Activated CD8-positive, alpha-beta memory T cell treated with anti-CD3 and anti-CD28 coated beads, Interleukin-2, amount 10 ng/mL, durations not matched to agents 7 days and 5 days (primary cell): ENCODE measurements at regions of chrX and their contacts with region 1.

Region 1: GRCh38 chrX:132292793-132293192 is 73.5 kb upstream of the RAP2C start:
- DNase-seq: peak; percentile 39
- ATAC-seq: no peak
- H3K4me3 Mint-ChIP-seq: no peak overlapping the region
- H3K27ac Mint-ChIP-seq: no peak overlapping the region
- H3K4me1 Mint-ChIP-seq: peaks cover 3% of the 10 kb centered on the region
- H3K27me3 Mint-ChIP-seq: no peaks in the 10 kb centered on the region

Region 2: GRCh38 chrX:132266583-132267355 is 26.0 kb before region 1 on chrX:
- CTCF ChIA-PET with region 1: no interaction called
- DNase-seq: no peak
- ATAC-seq: peak; percentile 20
- H3K4me3 Mint-ChIP-seq: no peak overlapping the region
- H3K27ac Mint-ChIP-seq: no peak overlapping the region
- H3K4me1 Mint-ChIP-seq: peaks cover 20% of the 10 kb centered on the region
- H3K27me3 Mint-ChIP-seq: no peaks in the 10 kb centered on the region

Region 3: GRCh38 chrX:132330117-132330729 is 37.4 kb after region 1 on chrX:
- CTCF ChIA-PET with region 1: no interaction called
- DNase-seq: no peak
- ATAC-seq: no peak
- H3K4me3 Mint-ChIP-seq: no peak overlapping the region
- H3K27ac Mint-ChIP-seq: no peak overlapping the region
- H3K4me1 Mint-ChIP-seq: peaks cover 11% of the 10 kb centered on the region
- H3K27me3 Mint-ChIP-seq: no peaks in the 10 kb centered on the region

Region 4: GRCh38 chrX:132393992-132394391 is 101.2 kb after region 1 on chrX:
- CTCF ChIA-PET with region 1: no interaction called
- DNase-seq: no peak
- ATAC-seq: no peak
- H3K4me3 Mint-ChIP-seq: no peak overlapping the region
- H3K27ac Mint-ChIP-seq: no peak overlapping the region
- H3K4me1 Mint-ChIP-seq: no peaks in the 10 kb centered on the region
- H3K27me3 Mint-ChIP-seq: no peaks in the 10 kb centered on the region

Region 5: GRCh38 chrX:132489578-132490419 is 197.0 kb after region 1 on chrX:
- CTCF ChIA-PET with region 1: interaction called, 11 read pairs
- DNase-seq: peak; percentile 63
- ATAC-seq: peak; percentile 59
- H3K4me3 Mint-ChIP-seq: peak overlapping the region; percentile 83
- H3K27ac Mint-ChIP-seq: peak overlapping the region; percentile 96
- H3K4me1 Mint-ChIP-seq: peaks cover 39% of the 10 kb centered on the region
- H3K27me3 Mint-ChIP-seq: no peaks in the 10 kb centered on the region

Region 6: GRCh38 chrX:132563976-132564375 is 271.2 kb after region 1 on chrX:
- CTCF ChIA-PET with region 1: no interaction called
- DNase-seq: no peak
- ATAC-seq: no peak
- H3K4me3 Mint-ChIP-seq: no peak overlapping the region
- H3K27ac Mint-ChIP-seq: no peak overlapping the region
- H3K4me1 Mint-ChIP-seq: no peaks in the 10 kb centered on the region
- H3K27me3 Mint-ChIP-seq: no peaks in the 10 kb centered on the region

Region 7: DNA sequence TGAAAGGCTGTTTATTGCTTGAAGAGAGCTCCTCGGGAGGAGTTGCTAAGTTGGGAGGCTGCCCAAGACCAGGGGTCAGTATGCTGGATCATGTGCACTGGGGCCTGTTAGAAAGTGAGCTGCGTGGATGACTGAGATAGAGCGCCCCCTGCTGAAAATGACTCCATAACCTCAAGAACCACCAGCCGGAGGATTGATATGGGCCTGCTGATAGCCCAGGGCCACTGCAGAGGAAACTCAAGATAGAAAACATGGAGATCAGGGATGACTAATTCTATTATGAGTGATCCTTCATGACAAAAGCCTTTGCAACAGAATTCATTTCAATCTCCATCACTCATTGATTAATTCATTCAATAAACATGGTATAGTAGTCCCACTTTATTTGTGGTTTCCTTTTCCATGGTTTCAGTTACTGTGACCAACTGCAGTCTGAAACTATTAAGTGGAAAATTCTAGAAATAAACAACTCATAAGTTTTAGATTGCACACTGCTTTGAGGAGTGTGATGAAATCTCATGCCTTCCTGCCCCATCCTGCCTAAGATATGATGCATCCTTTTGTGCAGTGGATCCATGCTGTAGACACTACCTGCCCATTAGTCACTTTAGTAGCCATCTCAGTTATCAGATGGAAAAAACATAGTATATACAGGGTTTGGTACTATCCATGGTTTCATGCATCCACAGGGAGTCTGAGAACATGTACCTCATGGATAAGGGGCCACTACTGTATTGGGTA is 322.8 kb after region 1 on chrX:
- CTCF ChIA-PET with region 1: interaction called, 27 read pairs
- DNase-seq: peak; percentile 44
- ATAC-seq: peak; percentile 57
- H3K4me3 Mint-ChIP-seq: no peak overlapping the region
- H3K27ac Mint-ChIP-seq: no peak overlapping the region
- H3K4me1 Mint-ChIP-seq: no peaks in the 10 kb centered on the region
- H3K27me3 Mint-ChIP-seq: no peaks in the 10 kb centered on the region

Region 8: DNA sequence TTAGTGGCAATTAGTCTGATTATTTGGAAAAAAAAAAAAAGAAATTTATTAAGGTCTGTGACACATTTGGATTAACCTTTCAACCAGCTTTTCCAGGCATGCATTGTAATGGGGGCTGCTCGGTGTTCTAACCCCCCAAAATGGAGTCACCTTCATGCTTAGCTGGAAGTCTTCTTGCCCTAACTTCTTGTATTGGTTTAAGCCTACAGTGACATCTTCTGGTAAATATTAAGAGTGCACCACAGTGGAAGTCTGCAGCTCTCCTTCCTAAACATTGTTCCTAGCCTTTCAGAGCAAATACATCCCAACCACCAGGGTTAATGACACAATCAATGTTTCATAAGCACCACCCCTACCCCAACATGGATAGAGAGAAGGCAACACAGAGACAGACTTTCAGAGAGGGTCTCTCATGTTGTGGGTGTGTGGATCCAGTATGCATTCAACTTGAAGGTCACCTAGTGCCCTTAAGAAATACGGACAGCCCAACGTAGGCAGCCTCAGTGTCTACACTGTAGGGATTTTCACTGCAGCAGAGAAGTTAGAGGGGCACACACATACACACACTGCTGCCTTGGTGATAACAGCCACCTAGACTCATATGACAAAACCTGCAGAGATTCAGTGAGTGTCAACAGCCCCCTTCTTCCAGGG is 338.9 kb after region 1 on chrX:
- CTCF ChIA-PET with region 1: interaction called, 12 read pairs
- DNase-seq: no peak
- ATAC-seq: peak; percentile 47
- H3K4me3 Mint-ChIP-seq: no peak overlapping the region
- H3K27ac Mint-ChIP-seq: no peak overlapping the region
- H3K4me1 Mint-ChIP-seq: no peaks in the 10 kb centered on the region
- H3K27me3 Mint-ChIP-seq: no peaks in the 10 kb centered on the region